Right ventricle myocardium superior (tissue), 1 donor: ENCODE measurements at regions of chrX and their contacts with region 1.

Region 1: DNA sequence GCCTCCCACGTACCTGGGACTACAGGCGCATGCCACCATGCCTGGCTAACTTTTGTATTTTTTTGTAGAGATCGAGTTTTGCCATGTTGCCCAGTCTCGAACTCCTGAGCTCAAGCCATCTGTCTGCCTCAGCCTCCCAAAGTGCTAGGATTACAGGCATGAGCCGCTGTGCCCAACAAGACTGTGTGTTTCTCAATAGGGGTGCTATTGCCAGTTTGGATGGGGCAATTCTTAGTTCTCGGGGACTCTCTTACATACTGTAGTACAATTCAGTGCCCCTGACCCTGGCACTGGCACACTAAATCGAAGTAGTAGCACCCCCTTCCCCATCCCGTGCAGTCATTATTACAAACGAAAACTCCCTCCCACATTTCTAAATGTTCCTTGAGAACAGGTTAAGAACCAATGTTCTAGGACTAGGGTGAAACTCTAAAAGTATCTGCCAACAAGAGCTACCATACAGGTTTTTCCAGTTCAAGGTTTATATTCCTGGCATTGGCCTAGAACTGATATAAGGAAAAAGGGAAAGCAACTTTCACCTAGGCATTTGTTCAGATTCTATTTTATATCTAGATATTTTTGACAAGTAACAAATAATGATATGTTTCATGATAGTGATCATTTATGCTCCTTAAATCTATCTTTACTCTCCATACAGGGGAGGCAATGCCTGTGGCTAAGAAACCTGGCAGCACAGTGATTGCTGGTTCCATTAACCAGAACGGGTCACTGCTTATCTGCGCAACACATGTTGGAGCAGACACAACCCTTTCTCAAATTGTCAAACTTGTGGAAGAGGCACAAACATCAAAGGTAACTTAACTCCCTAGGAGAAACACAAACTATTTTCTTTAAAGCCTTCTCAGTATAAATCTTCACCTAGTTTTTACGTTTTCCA is 50.4 kb upstream of the PGAM4 start:
- DNase-seq: no peak
- ATAC-seq: no peak

Region 2: GRCh38 chrX:77925764-77926163 is 94.1 kb before region 1 on chrX:
- intact Hi-C with region 1: loop called (anchors 10 kb)
- DNase-seq: no peak
- ATAC-seq: no peak

Region 3: GRCh38 chrX:78314571-78314970 is 294.7 kb after region 1 on chrX:
- intact Hi-C with region 1: no loop called
- DNase-seq: no peak
- ATAC-seq: no peak